Breast epithelium (tissue), 4 donors: ENCODE measurements at regions of chr5 and their contacts with region 1.

Region 1: DNA sequence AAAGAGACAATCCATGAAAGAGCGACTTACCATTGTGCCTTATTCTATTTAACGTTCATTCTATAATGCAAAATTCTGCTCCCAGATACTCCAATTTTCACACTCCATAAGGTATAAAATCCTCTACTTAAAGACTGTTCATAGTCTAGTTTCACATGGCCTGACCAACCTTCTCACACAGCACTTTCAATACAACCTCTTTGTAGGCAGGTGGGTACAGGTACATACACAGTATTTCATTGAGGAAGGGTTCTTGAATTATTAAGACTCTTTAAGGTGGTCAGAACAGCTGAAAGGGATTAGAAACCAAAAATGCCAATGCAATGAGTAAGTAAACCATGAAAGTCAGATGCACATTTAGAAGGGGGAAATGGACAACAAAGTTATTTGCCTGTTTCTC is 352.0 kb downstream of the PARP8 start:
- DNase-seq: no peak
- H3K4me3 ChIP-seq: no peak overlapping the region
- H3K27ac ChIP-seq: no peak overlapping the region
- H3K4me1 ChIP-seq: no peaks in the 10 kb centered on the region
- H3K27me3 ChIP-seq: no peaks in the 10 kb centered on the region
- CTCF ChIP-seq: no peak
- POLR2A ChIP-seq: no peak

Region 2: DNA sequence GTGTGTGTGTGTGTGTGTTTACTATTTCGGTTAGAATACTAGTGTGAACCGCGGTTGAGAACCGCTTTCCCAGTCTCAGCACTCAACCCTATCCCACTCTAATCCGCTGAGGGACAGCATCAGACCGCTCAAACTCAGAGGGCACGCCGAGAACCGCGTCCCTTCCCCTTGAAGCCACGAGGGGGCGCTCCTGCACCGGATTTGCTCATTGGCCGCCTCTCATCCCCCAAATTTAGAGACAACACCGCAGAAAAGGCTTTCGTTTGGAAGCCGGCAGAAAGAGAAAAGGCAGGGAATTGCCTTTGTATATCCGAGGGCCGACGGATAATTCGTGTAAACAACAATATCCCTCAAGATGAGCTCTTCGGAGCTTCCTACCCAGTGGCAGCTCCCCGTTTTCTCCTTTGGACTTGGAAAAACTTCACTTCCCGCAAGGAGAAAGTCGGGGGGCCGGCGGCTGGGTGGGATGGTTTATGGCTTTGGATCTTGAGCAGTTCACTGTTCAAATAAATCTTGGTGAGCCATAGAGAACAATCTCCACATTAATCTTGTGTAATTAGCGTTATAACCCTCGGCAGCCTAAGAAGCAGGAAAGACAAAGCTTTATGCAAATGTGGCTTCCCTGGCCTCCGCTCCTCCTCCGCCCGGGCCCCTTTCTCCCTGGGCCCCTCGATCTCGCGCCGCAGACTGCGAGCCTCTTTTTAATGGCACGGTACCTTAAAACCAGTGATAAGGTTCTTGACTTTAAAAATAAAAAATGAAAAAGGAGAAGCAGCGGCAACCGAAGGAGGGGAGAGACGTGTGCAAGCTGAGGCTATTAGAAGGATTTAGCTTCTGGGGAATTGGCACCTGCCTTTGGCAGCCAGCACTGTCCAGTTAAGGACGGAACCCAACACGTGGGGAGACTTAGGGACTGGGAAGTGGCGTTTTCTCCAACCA is 55.2 kb before region 1 on chr5:
- intact Hi-C with region 1: no loop called
- DNase-seq: peak; percentile 40 to 78
- H3K4me3 ChIP-seq: peak overlapping the region; percentile 32 to 62 (median 48)
- H3K27ac ChIP-seq: no peak overlapping the region
- H3K4me1 ChIP-seq: peaks cover 0 to 6% of the 10 kb centered on the region in 2 donors
- H3K27me3 ChIP-seq: peaks cover 0 to 49% of the 10 kb centered on the region in 2 donors
- CTCF ChIP-seq: peak; percentile 68 to 89 (median 77)
- POLR2A ChIP-seq: no peak

Region 3: GRCh38 chr5:51001227-51001923 is 17.0 kb before region 1 on chr5:
- intact Hi-C with region 1: loop called (anchors 1 kb)
- DNase-seq: no peak
- H3K4me3 ChIP-seq: no peak overlapping the region
- H3K27ac ChIP-seq: no peak overlapping the region
- H3K4me1 ChIP-seq: no peaks in the 10 kb centered on the region
- H3K27me3 ChIP-seq: no peaks in the 10 kb centered on the region
- CTCF ChIP-seq: no peak
- POLR2A ChIP-seq: no peak

Region 4: GRCh38 chr5:52339285-52339684 is 1320.9 kb after region 1 on chr5:
- intact Hi-C with region 1: loop called (anchors 10 kb)
- DNase-seq: no peak
- H3K4me3 ChIP-seq: no peak overlapping the region
- H3K27ac ChIP-seq: no peak overlapping the region
- H3K4me1 ChIP-seq: no peaks in the 10 kb centered on the region
- H3K27me3 ChIP-seq: no peaks in the 10 kb centered on the region
- CTCF ChIP-seq: no peak
- POLR2A ChIP-seq: no peak